Activated CD8-positive, alpha-beta T cell treated with anti-CD3 and anti-CD28 coated beads, Interleukin-2, amount 10 ng/mL, durations not matched to agents 7 days and 5 days (primary cell): ENCODE measurements at regions of chr1 and their contacts with region 1.

Region 1: DNA sequence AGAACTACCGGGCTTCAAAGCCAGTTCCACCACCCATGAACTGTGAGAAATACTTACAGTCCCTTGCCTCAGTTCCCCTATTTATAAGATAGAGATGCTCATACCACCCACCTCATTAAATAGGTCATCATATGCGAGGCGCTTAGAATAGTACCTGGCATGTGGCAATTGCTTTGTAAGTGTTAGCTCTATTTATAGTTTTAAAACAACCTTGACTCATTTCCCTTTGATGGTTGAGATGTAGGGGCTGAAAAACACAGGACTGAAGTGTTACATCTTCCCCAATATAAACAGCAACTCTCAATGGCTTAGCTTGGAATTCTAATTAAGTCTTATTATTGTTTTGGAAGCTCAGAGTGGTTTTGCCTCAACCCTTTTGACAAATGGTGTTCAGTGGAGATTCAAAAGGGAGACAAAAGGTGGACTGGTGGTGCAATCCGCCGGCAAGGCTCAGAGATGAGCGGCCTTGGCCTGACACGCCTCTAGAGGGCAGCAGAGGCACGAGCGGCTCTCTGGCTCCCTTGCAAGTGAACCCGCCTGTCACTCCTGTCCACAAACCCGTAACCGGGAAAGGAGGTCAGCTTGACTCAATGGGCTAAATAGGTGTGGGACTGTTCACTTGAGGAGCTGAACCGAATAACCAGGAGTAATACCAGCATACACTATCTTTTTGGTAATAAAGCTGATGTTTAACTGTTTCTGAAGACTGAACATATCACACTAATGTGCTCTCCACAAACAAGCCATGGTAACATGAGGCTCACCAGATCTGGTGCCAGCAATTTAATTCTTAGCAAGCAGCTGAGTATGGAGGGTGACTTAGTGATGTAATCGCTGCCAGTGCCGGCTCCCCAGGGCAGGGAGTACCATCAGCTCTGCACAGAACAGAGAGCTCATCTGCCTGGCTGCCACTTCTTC is 19.5 kb upstream of the SMYD2 start:
- DNase-seq: peak; percentile 88
- ATAC-seq: peak; percentile 96
- H3K4me3 Mint-ChIP-seq: no peak overlapping the region
- H3K27ac Mint-ChIP-seq: no peak overlapping the region
- H3K4me1 Mint-ChIP-seq: peaks cover 20% of the 10 kb centered on the region
- H3K27me3 Mint-ChIP-seq: peaks cover 49% of the 10 kb centered on the region

Region 2: GRCh38 chr1:214241060-214241459 is 20.4 kb before region 1 on chr1:
- CTCF ChIA-PET with region 1: interaction called, 12 read pairs
- POLR2A ChIA-PET with region 1: no interaction called
- DNase-seq: no peak
- ATAC-seq: no peak
- H3K4me3 Mint-ChIP-seq: no peak overlapping the region
- H3K27ac Mint-ChIP-seq: no peak overlapping the region
- H3K4me1 Mint-ChIP-seq: no peaks in the 10 kb centered on the region
- H3K27me3 Mint-ChIP-seq: peaks cover 12% of the 10 kb centered on the region

Region 3: DNA sequence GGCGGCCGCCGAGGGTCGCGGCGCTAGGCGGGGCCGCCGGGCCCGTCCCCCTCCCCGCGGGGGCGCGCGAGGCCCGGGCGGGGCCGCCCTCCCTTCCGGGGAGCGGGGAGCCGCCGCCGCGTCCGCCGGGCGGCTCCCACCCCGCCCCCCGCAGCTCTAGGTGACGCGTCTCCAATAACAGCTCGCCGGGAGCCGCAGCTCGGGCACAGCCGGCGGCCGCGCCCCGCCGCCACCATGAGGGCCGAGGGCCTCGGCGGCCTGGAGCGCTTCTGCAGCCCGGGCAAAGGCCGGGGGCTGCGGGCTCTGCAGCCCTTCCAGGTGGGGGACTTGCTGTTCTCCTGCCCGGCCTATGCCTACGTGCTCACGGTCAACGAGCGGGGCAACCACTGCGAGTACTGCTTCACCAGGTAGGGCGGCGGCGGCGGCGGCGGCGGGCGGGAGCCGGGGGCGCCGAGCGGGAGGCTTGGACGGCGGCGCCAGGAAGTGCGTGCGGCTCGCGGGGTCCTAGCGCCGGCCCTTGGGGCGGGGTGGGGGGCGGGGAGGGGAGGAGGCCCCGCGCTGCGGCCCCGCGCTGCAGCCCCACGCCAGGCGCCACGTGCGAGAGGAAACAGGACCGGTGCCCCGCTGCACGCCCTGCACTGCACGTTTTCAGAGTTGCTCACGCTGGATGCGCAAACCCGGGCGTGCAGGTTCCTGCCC is 19.7 kb after region 1 on chr1 and contains the start of gene SMYD2:
- CTCF ChIA-PET with region 1: interaction called, 48 read pairs
- POLR2A ChIA-PET with region 1: interaction called, 4 read pairs
- DNase-seq: peak; percentile 73
- ATAC-seq: peak; percentile 79
- H3K4me3 Mint-ChIP-seq: peak within 1 kb of the TSS; percentile 84
- H3K27ac Mint-ChIP-seq: peak within 1 kb of the TSS; percentile 82
- H3K4me1 Mint-ChIP-seq: peaks cover 47% of the 10 kb centered on the region
- H3K27me3 Mint-ChIP-seq: no peaks in the 10 kb centered on the region
- total RNA-seq, gene SMYD2: 37.2 to 38.4 TPM

Region 4: GRCh38 chr1:214310777-214311690 is 49.6 kb after region 1 on chr1:
- CTCF ChIA-PET with region 1: interaction called, 56 read pairs
- POLR2A ChIA-PET with region 1: no interaction called
- DNase-seq: no peak
- ATAC-seq: peak; percentile 73
- H3K4me3 Mint-ChIP-seq: peak overlapping the region; percentile 69
- H3K27ac Mint-ChIP-seq: peak overlapping the region; percentile 66
- H3K4me1 Mint-ChIP-seq: peaks cover 18% of the 10 kb centered on the region
- H3K27me3 Mint-ChIP-seq: no peaks in the 10 kb centered on the region

Region 5: GRCh38 chr1:214337511-214337910 is 76.0 kb after region 1 on chr1:
- CTCF ChIA-PET with region 1: interaction called, 486 read pairs
- POLR2A ChIA-PET with region 1: interaction called, 3 read pairs
- DNase-seq: no peak
- ATAC-seq: no peak
- H3K4me3 Mint-ChIP-seq: no peak overlapping the region
- H3K27ac Mint-ChIP-seq: no peak overlapping the region
- H3K4me1 Mint-ChIP-seq: peaks cover 7% of the 10 kb centered on the region
- H3K27me3 Mint-ChIP-seq: no peaks in the 10 kb centered on the region

Region 6: GRCh38 chr1:214602764-214603657 is 341.5 kb after region 1 on chr1 and contains the start of gene CENPF:
- CTCF ChIA-PET with region 1: interaction called, 10 read pairs
- POLR2A ChIA-PET with region 1: no interaction called
- DNase-seq: peak; percentile 97
- ATAC-seq: peak; percentile 98
- H3K4me3 Mint-ChIP-seq: peak within 1 kb of the TSS; percentile 92
- H3K27ac Mint-ChIP-seq: peak within 1 kb of the TSS; percentile 96
- H3K4me1 Mint-ChIP-seq: peaks cover 25% of the 10 kb centered on the region
- H3K27me3 Mint-ChIP-seq: no peaks in the 10 kb centered on the region
- total RNA-seq, gene CENPF: 176 to 180 TPM